OCI-LY7 (cell line): ENCODE measurements at regions of chr3 and their contacts with region 1.

Region 1: DNA sequence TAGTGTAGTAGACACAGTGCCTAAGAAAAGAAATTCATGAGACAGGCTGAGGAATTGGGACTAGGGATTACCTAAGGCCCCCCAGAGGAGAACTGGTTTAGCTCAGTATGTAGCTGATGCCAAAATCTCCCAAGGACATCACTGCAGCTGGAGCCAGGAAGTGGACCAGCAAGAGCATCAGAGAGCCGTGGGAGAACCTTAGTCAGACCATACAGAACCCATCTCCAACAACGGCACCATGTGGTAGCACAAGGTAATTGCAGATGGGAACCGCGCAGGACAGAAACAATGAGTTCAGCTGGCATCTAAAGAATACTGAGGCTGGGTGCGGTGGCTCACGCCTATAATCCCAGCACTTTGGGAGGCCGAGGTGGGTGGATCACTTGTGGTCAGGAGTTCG is 81.7 kb downstream of the WNT5A start:
- DNase-seq: peak; percentile 49
- H3K4me3 ChIP-seq: no peak overlapping the region
- H3K27ac ChIP-seq: no peak overlapping the region
- H3K4me1 ChIP-seq: peaks cover 10% of the 10 kb centered on the region
- CTCF ChIP-seq: peak; percentile 74

Region 2: DNA sequence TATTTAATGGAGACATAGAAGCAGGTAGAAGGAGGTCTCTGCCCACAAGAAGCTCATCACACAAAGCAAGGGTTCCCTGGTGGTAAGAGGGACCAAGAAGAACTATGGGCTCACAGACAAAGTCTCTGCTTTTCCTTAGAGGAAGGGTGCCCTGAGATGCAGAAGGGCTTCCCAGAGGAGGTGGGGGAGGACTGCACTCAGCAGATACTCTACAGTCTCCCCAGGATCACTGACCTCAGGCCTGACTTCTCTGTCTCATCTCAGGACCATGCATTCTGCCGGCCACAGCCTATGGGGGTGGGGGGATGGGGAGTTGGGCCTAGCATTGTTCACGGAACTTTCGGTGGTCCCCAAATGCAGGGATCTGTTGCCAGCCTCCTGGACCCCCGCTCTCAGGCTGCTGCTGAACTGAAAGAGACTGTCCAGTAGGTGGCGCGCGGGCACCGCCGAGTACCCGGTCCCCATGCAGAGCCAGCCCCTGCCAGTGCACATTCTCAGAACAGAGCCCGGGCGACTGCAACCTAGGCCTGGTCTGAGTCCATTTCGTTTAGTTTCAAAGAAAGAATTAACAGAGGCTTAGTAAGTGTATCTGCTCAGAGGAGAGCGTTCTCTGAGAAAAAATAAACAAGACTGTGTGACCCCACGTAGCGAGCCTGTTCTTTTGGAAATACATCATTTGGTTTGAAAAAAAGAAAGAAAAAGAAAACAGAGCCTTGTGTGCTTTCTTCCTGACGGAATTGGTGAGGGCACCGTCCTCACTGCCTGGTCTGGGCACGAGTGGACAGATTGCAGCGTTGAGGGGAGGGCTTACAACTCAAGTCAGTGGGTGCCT is 551.6 kb before region 1 on chr3:
- CTCF ChIA-PET with region 1: no interaction called
- POLR2A ChIA-PET with region 1: no interaction called
- intact Hi-C with region 1: loop called (anchors 10 kb)
- DNase-seq: peak; percentile 60
- H3K4me3 ChIP-seq: no peak overlapping the region
- H3K27ac ChIP-seq: no peak overlapping the region
- H3K4me1 ChIP-seq: no peaks in the 10 kb centered on the region
- CTCF ChIP-seq: peak; percentile 90

Region 3: DNA sequence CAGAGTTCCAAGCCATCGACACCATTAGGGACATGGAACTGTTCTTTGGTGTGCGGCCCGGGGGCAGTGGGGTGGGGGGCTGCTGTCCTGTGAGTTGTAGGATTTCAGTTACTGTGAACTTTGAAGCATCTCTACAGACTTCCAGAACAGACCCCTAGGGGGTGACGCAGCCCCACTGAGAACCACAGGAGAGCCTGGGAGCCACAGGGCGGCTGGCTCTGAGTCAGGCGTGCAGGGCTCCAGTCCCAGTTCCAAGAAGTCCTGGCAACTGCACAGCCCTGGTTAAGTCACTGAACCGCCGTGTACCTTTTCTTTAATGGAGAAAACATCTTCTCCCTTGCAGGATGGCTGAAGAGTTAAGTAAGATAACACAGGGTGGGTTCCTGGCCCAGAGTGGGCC is 454.0 kb before region 1 on chr3:
- CTCF ChIA-PET with region 1: no interaction called
- POLR2A ChIA-PET with region 1: no interaction called
- intact Hi-C with region 1: loop called (anchors 2 kb)
- DNase-seq: peak; percentile 22
- H3K4me3 ChIP-seq: no peak overlapping the region
- H3K27ac ChIP-seq: no peak overlapping the region
- H3K4me1 ChIP-seq: no peaks in the 10 kb centered on the region
- CTCF ChIP-seq: peak; percentile 67

Region 4: GRCh38 chr3:55198543-55198942 is 206.9 kb before region 1 on chr3:
- CTCF ChIA-PET with region 1: no interaction called
- POLR2A ChIA-PET with region 1: no interaction called
- intact Hi-C with region 1: no loop called
- DNase-seq: no peak
- H3K4me3 ChIP-seq: no peak overlapping the region
- H3K27ac ChIP-seq: no peak overlapping the region
- H3K4me1 ChIP-seq: peaks cover 7% of the 10 kb centered on the region
- CTCF ChIP-seq: no peak

Region 5: DNA sequence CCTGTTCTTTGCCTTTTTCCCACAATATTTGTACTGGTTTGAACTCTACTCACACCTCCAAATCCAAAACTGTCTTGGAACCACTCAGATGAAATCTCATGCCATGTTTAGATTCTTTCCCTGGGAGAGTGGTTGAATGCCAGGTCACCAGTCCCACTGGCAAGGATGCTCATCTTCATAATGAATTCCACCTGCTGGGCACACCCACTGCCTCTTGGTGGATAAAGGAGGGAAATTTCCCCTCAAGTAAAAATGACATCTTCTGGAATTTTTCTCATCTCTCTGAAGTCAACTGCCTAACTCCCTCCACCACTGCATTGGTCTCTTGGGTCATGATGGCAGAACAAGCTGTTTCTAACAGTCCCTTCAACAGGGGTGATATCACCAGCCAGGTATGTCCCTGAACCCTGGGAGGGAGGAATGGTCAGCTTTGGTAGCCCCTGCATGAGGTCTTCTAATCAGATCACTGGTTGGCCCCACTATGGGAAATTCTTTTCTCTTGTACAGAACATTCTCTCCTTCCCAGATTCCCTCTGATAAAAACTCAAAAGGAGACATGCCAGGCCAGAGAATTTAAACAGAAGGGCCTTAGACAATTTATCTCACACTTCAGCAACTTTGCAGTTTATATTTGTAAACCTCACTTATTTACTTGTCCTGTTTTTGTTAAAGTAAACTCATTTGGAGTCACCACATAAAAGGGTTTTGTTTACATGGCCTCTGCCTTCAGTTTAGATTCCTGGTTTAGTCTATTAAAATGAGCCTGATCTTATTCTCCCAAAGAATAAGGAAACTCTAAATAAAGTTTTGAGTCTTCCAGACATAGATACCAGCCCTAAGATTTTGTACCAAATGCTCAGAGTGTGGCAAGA is 61.7 kb before region 1 on chr3:
- CTCF ChIA-PET with region 1: no interaction called
- POLR2A ChIA-PET with region 1: no interaction called
- intact Hi-C with region 1: no loop called
- DNase-seq: no peak
- H3K4me3 ChIP-seq: no peak overlapping the region
- H3K27ac ChIP-seq: no peak overlapping the region
- H3K4me1 ChIP-seq: no peaks in the 10 kb centered on the region
- CTCF ChIP-seq: no peak